Activated naive CD4-positive, alpha-beta T cell treated with anti-CD3 and anti-CD28 coated beads, Interleukin-2, amount 10 ng/mL, durations not matched to agents 7 days and 5 days (primary cell): ENCODE measurements at regions of chr16 and their contacts with region 1.

Region 1: GRCh38 chr16:29700253-29700987 is 21.4 kb downstream of the QPRT start:
- DNase-seq: peak; percentile 82
- H3K4me3 Mint-ChIP-seq: peak overlapping the region; percentile 15
- H3K27ac Mint-ChIP-seq: peak overlapping the region; percentile 95
- H3K4me1 Mint-ChIP-seq: peaks cover 46% of the 10 kb centered on the region
- H3K27me3 Mint-ChIP-seq: peaks cover 20% of the 10 kb centered on the region

Region 2: GRCh38 chr16:29653471-29653870 is 46.9 kb before region 1 on chr16:
- CTCF ChIA-PET with region 1: no interaction called
- DNase-seq: no peak
- H3K4me3 Mint-ChIP-seq: no peak overlapping the region
- H3K27ac Mint-ChIP-seq: no peak overlapping the region
- H3K4me1 Mint-ChIP-seq: peaks cover 21% of the 10 kb centered on the region
- H3K27me3 Mint-ChIP-seq: peaks cover 6% of the 10 kb centered on the region

Region 3: DNA sequence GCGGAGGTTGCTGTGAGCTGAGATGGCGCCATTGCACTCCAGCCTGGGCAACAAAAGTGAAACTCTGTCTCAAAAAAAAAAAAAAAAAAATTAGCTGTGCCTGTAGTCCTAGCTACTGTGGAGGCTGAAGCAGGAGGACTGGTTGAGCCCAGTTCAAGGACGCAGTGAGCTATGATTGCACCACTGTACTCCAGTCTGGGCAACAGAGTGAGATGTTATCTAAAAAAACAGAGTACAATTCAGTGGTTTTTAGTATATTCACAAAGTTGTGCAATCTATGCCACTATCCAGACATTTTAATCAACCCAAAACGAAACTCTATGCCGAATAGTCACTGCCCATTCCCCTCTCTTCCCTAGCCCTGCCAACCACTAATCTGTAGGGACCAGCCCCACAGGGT is 20.3 kb after region 1 on chr16:
- CTCF ChIA-PET with region 1: interaction called, 29 read pairs
- DNase-seq: no peak
- H3K4me3 Mint-ChIP-seq: no peak overlapping the region
- H3K27ac Mint-ChIP-seq: no peak overlapping the region
- H3K4me1 Mint-ChIP-seq: peaks cover 17% of the 10 kb centered on the region
- H3K27me3 Mint-ChIP-seq: peaks cover 35% of the 10 kb centered on the region

Region 4: GRCh38 chr16:29784901-29785500 is 84.6 kb after region 1 on chr16:
- CTCF ChIA-PET with region 1: interaction called, 27 read pairs
- DNase-seq: peak; percentile 79
- H3K4me3 Mint-ChIP-seq: peak overlapping the region; percentile 25
- H3K27ac Mint-ChIP-seq: peak overlapping the region; percentile 50
- H3K4me1 Mint-ChIP-seq: peaks cover 31% of the 10 kb centered on the region
- H3K27me3 Mint-ChIP-seq: peaks cover 24% of the 10 kb centered on the region

Region 5: DNA sequence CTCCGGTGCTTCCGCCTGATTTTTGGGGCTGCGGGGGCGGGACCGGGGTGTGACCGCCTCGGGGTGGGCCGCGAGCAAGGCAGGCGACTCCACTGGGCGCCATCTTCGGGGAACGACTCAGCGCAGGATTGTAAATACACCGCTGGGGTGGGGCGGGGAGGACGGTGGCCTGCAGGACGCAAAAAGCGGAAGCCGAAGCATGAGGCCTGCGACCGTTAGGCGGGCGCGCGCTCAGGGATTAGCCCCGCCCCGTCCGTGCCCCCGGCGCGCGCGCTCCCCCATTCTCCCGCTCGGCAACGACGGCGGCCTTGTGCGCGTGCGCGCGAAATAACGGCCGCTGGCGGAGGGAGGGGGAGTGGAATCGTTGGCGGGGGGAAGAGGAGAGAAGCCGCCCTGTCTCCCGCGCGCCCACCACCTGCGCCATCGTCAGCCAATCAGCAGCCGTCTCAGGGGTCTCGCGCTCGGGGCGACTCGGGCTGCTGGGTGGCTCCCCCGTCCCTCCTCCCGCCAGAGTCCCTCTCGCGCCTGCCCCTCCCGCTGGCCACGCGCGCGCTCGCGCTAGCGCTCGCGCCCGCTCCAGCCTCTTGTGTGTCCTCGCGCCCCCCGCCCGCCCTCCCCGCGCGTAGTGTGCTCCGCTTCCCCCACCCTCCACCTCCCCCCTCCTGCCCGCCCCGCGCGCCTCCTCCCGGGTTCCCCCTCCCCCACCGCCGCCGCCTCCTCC is 105.1 kb after region 1 on chr16:
- CTCF ChIA-PET with region 1: interaction called, 11 read pairs
- DNase-seq: peak; percentile 99
- H3K4me3 Mint-ChIP-seq: peak overlapping the region; percentile 100
- H3K27ac Mint-ChIP-seq: peak overlapping the region; percentile 100
- H3K4me1 Mint-ChIP-seq: peaks cover 52% of the 10 kb centered on the region
- H3K27me3 Mint-ChIP-seq: peaks cover 6% of the 10 kb centered on the region

Region 6: GRCh38 chr16:29837841-29838240 is 137.4 kb after region 1 on chr16:
- CTCF ChIA-PET with region 1: no interaction called
- DNase-seq: no peak
- H3K4me3 Mint-ChIP-seq: no peak overlapping the region
- H3K27ac Mint-ChIP-seq: peak overlapping the region; percentile 24
- H3K4me1 Mint-ChIP-seq: peaks cover under 1% of the 10 kb centered on the region
- H3K27me3 Mint-ChIP-seq: no peaks in the 10 kb centered on the region

Region 7: DNA sequence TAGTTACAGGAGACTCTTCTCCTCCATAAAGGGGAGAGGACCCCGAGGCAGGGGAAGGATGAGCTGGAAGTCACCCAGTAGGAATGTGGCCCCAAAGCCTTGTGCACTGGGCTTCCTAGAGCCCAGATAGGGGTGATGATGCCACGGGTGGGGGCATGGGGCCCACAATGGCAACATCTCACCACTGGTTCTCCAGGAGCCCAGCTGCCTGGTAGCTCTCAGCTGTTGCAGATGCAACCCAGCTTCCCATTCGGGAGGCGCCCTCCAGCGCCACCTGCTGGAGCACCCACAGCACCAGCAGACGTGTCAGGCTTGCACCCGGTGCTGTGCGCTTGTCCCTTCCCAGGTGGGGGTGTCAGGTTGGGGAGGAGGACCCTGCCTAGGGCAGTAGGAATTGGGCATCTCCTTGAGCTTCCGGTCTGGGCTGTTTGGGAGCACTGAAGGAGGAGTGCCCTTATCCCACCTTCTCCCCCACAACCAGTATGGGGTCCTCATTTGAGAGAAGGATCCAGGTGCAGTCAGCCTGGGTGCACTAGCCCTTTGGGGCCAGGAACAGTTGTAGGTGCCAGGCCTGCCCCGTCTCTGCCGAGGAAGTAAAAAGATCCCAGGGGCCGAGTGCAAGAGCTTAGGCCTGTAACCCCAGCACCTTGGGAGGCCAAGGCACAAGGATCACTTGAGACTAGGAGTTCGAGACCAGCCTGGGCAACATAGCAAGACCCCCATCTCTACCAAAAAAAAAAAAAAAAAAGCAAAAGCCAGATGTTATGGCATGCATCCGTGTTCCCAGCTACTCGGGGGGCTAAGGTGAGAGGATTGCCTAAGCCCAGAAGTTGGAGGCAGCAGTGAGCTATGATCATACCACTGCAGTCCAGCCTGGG is 148.2 kb after region 1 on chr16:
- CTCF ChIA-PET with region 1: interaction called, 65 read pairs
- DNase-seq: peak; percentile 90
- H3K4me3 Mint-ChIP-seq: no peak overlapping the region
- H3K27ac Mint-ChIP-seq: no peak overlapping the region
- H3K4me1 Mint-ChIP-seq: peaks cover 7% of the 10 kb centered on the region
- H3K27me3 Mint-ChIP-seq: no peaks in the 10 kb centered on the region

Region 8: GRCh38 chr16:30032083-30032819 is 331.8 kb after region 1 on chr16:
- CTCF ChIA-PET with region 1: interaction called, 35 read pairs
- DNase-seq: peak; percentile 77
- H3K4me3 Mint-ChIP-seq: no peak overlapping the region
- H3K27ac Mint-ChIP-seq: no peak overlapping the region
- H3K4me1 Mint-ChIP-seq: peaks cover 8% of the 10 kb centered on the region
- H3K27me3 Mint-ChIP-seq: peaks cover 86% of the 10 kb centered on the region